Psoas muscle (tissue), 8 donors: ENCODE measurements at regions of chr7 and their contacts with region 1.

Region 1: DNA sequence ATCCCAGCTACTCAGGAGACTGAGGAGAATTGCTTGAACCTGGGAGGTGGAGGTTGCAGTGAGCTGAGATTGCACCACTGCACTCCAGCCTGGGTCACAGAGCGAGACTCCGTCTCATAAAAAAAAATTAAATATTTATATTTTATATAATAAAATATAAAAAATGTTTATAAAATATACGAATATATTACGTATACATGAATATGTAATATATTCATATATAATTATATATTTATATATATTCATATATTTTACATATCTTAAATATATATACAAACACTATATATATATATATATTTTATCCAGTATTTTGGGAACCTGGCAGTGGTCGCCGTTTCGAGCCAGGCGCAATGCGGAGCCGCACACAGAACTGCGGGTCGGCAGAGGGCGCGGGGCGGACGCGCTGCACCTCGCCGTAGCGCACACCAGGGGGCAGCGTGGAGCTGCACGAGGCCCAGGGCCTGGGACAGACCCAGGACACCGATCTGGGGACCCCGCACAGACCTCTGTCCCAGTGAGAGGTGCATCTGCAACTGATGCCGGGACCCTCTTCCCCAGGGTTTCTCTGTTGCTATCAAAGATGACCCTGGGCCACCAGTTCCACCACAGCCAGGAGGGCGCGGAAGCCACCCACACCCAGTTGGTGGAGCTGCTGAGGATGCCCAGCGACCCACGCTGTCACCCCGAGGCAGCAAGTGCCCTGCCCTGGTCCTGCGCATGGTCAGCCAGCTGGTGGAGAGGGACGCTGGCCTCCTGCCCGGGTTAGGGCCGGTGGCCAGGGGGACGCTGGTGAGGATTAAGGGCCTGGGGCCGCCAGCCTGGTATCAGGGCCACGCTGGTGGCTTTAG is 22.7 kb downstream of the AP5Z1 start:
- DNase-seq: peak; percentile 48 to 77
- ATAC-seq: peak; percentile 86 to 90 (median 88)
- H3K4me3 ChIP-seq: no peak overlapping the region
- H3K27ac ChIP-seq: no peak overlapping the region
- H3K4me1 ChIP-seq: no peaks in the 10 kb centered on the region
- H3K27me3 ChIP-seq: no peaks in the 10 kb centered on the region
- CTCF ChIP-seq: peak; percentile 85

Region 2: GRCh38 chr7:4738711-4739527 is 59.2 kb before region 1 on chr7:
- intact Hi-C with region 1: no loop called
- DNase-seq: peak in 1 of 2 donors; percentile 56
- ATAC-seq: peak; percentile 29 to 49 (median 36)
- H3K4me3 ChIP-seq: peak overlapping the region; percentile 56
- H3K27ac ChIP-seq: peak overlapping the region; percentile 91
- H3K4me1 ChIP-seq: peaks cover 44% of the 10 kb centered on the region
- H3K27me3 ChIP-seq: no peaks in the 10 kb centered on the region
- CTCF ChIP-seq: no peak

Region 3: DNA sequence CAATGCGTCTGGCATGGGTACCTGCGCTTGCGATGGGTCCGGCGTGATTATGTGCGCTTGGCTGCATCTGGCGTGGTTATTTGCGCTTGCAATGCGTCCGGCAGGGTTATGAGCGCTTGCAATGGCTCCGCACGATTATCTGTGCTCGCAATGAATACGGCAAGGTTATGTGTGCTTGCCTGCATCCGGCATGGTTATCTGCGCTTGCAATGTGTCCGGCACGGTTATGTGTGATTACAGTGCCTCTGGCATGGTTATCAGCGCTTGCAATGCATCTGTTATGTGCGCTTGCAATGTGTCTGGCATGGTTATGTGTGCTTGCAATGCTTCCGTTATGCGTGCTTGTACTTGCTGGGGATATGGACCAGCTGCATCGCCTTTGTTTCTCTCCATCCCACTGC is 285.2 kb after region 1 on chr7:
- intact Hi-C with region 1: loop called (anchors 5 to 10 kb)
- DNase-seq: no peak
- ATAC-seq: no peak
- H3K4me3 ChIP-seq: no peak overlapping the region
- H3K27ac ChIP-seq: no peak overlapping the region
- H3K4me1 ChIP-seq: no peaks in the 10 kb centered on the region
- H3K27me3 ChIP-seq: peaks cover 0 to 10% (median 2%) of the 10 kb centered on the region in 3 donors
- CTCF ChIP-seq: no peak

Region 4: GRCh38 chr7:5193880-5194279 is 395.8 kb after region 1 on chr7:
- intact Hi-C with region 1: no loop called
- DNase-seq: no peak
- ATAC-seq: no peak
- H3K4me3 ChIP-seq: no peak overlapping the region
- H3K27ac ChIP-seq: no peak overlapping the region
- H3K4me1 ChIP-seq: peaks cover 13% of the 10 kb centered on the region
- H3K27me3 ChIP-seq: no peaks in the 10 kb centered on the region
- CTCF ChIP-seq: no peak